Calu3 (cell line): ENCODE measurements at regions of chr18 and their contacts with region 1.

Region 1: DNA sequence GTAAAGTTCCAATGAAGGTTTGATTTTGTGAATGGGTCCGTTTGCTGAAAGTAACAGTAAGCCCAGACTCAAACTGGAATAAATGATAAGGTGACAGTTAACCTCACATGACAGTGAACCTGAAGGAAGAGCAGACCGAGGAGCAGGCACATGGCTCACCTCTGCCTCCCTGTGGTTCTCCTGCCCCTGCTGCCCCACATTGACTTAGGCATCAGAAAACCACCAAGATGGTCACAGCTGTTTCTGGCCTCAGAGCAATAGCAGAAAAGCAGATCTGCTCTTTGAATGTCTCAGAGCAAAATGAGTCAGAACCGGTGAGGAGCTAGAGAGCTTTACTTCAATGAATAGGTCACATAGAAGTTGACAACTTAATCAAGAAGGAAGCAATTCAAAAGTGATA is 487.6 kb downstream of the METTL4 start:
- DNase-seq: peak; percentile 21
- H3K4me3 Mint-ChIP-seq: no peak overlapping the region
- H3K27ac Mint-ChIP-seq: no peak overlapping the region
- H3K4me1 Mint-ChIP-seq: peaks cover 10% of the 10 kb centered on the region
- H3K27me3 Mint-ChIP-seq: no peaks in the 10 kb centered on the region
- CTCF ChIP-seq: peak; percentile 49

Region 2: GRCh38 chr18:1585879-1586488 is 497.7 kb before region 1 on chr18:
- CTCF ChIA-PET with region 1: interaction called, 3 read pairs
- intact Hi-C with region 1: loop called (anchors 10 kb)
- DNase-seq: no peak
- H3K4me3 Mint-ChIP-seq: no peak overlapping the region
- H3K27ac Mint-ChIP-seq: no peak overlapping the region
- H3K4me1 Mint-ChIP-seq: no peaks in the 10 kb centered on the region
- H3K27me3 Mint-ChIP-seq: peaks cover 24% of the 10 kb centered on the region
- CTCF ChIP-seq: peak; percentile 42

Region 3: GRCh38 chr18:1914490-1914889 is 169.2 kb before region 1 on chr18:
- CTCF ChIA-PET with region 1: no interaction called
- intact Hi-C with region 1: loop called (anchors 1 kb)
- DNase-seq: peak; percentile 18
- H3K4me3 Mint-ChIP-seq: no peak overlapping the region
- H3K27ac Mint-ChIP-seq: no peak overlapping the region
- H3K4me1 Mint-ChIP-seq: no peaks in the 10 kb centered on the region
- H3K27me3 Mint-ChIP-seq: no peaks in the 10 kb centered on the region
- CTCF ChIP-seq: peak; percentile 48